PC-3 (cell line): ENCODE measurements at regions of chr15 and their contacts with region 1.

Region 1: GRCh38 chr15:58987489-58988005 is at the start of gene RNF111:
- DNase-seq: peak; percentile 91
- ATAC-seq: peak; percentile 88
- H3K4me3 ChIP-seq: peak within 1 kb of the TSS; percentile 97
- H3K27ac ChIP-seq: peak within 1 kb of the TSS; percentile 51
- H3K4me1 ChIP-seq: peaks cover 6% of the 10 kb centered on the region; the same call in 1 of the 2 replicates
- H3K27me3 ChIP-seq: no peaks in the 10 kb centered on the region
- CTCF ChIP-seq: no peak
- total RNA-seq, gene RNF111: 13.3 and 18.3 TPM in 2 replicates

Region 2: GRCh38 chr15:58830556-58830955 is 157.0 kb before region 1 on chr15:
- CTCF ChIA-PET with region 1: no interaction called
- POLR2A ChIA-PET with region 1: no interaction called
- intact Hi-C with region 1: no loop called
- DNase-seq: no peak
- ATAC-seq: no peak
- H3K4me3 ChIP-seq: no peak overlapping the region
- H3K27ac ChIP-seq: no peak overlapping the region
- H3K4me1 ChIP-seq: no peaks in the 10 kb centered on the region
- H3K27me3 ChIP-seq: no peaks in the 10 kb centered on the region
- CTCF ChIP-seq: no peak

Region 3: DNA sequence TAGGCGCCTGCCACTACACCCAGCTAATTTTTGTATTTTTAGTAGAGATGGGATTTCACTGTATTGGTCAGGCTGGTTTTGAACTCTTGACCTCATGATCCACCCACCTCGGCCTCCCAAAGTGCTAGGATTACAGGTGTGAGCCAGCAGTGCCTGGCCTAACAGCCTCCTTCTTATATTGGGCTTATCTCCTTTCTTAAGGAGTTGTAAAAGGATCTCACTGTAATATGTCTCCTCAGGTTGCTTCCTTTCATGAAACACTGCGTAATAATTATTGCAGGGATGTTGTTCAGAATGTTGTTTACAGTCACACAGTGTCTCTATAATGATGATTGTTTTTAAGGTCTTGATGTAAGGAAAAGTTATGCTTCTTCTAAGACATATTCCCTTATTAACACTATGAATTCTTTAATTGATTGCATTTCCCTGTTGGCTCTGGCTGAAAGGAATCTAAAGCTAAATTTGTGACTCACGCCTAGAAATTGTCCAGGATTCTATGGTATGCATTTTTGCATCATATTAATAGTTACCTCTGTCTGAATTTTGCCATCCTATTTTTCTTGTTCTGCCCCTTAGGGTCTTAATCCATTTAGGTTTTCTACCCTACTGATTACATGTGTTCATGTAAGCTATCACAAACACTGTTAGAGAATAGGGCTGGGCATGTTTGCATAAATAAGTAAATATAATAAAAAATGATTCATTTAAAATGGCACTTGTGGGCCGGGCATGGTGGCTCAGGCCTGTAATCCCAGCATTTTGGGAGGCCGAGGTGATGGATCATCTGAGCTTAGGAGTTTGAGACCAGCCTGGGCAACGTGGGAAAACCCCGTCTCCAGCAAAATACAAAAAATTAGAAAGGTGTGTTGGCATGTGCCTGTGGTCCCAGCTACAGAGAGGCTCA is 24.6 kb before region 1 on chr15:
- CTCF ChIA-PET with region 1: no interaction called
- POLR2A ChIA-PET with region 1: interaction called, 4 read pairs
- intact Hi-C with region 1: loop called (anchors 2 kb)
- DNase-seq: peak; percentile 59
- ATAC-seq: peak; percentile 93
- H3K4me3 ChIP-seq: no peak overlapping the region
- H3K27ac ChIP-seq: peak overlapping the region; percentile 57
- H3K4me1 ChIP-seq: peaks cover 21% of the 10 kb centered on the region
- H3K27me3 ChIP-seq: no peaks in the 10 kb centered on the region
- CTCF ChIP-seq: no peak

Region 4: DNA sequence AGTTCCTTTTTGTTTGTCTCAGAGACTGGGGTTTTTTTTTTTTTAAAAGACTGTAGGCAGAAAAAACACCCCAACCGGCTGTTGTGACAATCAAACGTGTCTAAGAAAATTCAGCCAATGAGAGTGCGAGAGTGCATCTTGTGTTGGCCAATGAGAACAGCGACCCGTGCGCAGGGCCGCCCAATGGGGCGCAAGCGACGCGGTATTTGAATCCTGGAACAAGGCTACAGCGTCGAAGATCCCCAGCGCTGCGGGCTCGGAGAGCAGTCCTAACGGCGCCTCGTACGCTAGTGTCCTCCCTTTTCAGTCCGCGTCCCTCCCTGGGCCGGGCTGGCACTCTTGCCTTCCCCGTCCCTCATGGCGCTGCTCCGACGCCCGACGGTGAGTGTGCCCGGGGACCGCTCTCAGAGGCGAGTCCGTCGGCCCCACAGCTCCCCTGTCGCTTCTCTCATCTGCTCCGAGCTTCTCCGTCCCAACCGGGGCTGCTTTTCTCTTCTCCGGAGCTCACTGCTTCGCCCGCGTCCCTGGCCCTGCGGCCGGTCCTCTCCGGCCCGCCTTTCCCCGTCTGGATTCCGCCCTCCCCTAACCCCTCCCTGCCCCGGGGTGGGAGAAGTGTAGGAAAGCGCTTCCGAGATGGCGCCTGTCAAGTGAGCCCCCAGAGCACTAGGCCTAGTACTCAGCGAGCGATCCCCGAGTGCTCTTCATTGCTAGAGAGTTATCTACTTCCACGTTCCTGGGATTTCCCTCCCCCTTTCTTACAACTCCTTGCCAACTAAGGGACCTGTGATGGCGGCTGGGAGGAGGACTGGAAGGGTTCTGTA is 117.6 kb after region 1 on chr15 and contains the start of gene CCNB2:
- CTCF ChIA-PET with region 1: no interaction called
- POLR2A ChIA-PET with region 1: interaction called, 5 read pairs
- intact Hi-C with region 1: loop called (anchors 5 kb)
- DNase-seq: peak; percentile 88
- ATAC-seq: peak; percentile 98
- H3K4me3 ChIP-seq: peak within 1 kb of the TSS; percentile 80
- H3K27ac ChIP-seq: peak within 1 kb of the TSS; percentile 47
- H3K4me1 ChIP-seq: peaks cover 9% of the 10 kb centered on the region; the same call in 1 of the 2 replicates
- H3K27me3 ChIP-seq: no peaks in the 10 kb centered on the region
- CTCF ChIP-seq: no peak
- total RNA-seq, gene CCNB2: 54.3 and 61.7 TPM in 2 replicates